ENCODE measurements at regions of chr7 and their contacts with region 1.

Region 1: GRCh38 chr7:142516038-142516501 is 233.2 kb upstream of the PRSS1 start:
- DNase-seq: peak; percentile 53
- H3K4me3 Mint-ChIP-seq: no peak overlapping the region
- H3K27ac Mint-ChIP-seq: peak overlapping the region; percentile 52
- H3K4me1 Mint-ChIP-seq: peaks cover 36% of the 10 kb centered on the region
- H3K27me3 Mint-ChIP-seq: peaks cover 3% of the 10 kb centered on the region

Region 2: GRCh38 chr7:142375666-142376313 is 140.3 kb before region 1 on chr7:
- CTCF ChIA-PET with region 1: no interaction called
- POLR2A ChIA-PET with region 1: no interaction called
- DNase-seq: no peak
- H3K4me3 Mint-ChIP-seq: no peak overlapping the region
- H3K27ac Mint-ChIP-seq: peak overlapping the region; percentile 25
- H3K4me1 Mint-ChIP-seq: no peaks in the 10 kb centered on the region
- H3K27me3 Mint-ChIP-seq: peaks cover 11% of the 10 kb centered on the region

Region 3: GRCh38 chr7:142469696-142470543 is 46.1 kb before region 1 on chr7:
- CTCF ChIA-PET with region 1: no interaction called
- POLR2A ChIA-PET with region 1: no interaction called
- DNase-seq: no peak
- H3K4me3 Mint-ChIP-seq: no peak overlapping the region
- H3K27ac Mint-ChIP-seq: peak overlapping the region; percentile 43
- H3K4me1 Mint-ChIP-seq: peaks cover 23% of the 10 kb centered on the region
- H3K27me3 Mint-ChIP-seq: peaks cover 3% of the 10 kb centered on the region

Region 4: GRCh38 chr7:142488036-142488633 is 27.9 kb before region 1 on chr7:
- CTCF ChIA-PET with region 1: no interaction called
- POLR2A ChIA-PET with region 1: no interaction called
- DNase-seq: no peak
- H3K4me3 Mint-ChIP-seq: no peak overlapping the region
- H3K27ac Mint-ChIP-seq: no peak overlapping the region
- H3K4me1 Mint-ChIP-seq: peaks cover 36% of the 10 kb centered on the region
- H3K27me3 Mint-ChIP-seq: no peaks in the 10 kb centered on the region

Region 5: GRCh38 chr7:142500364-142500763 is 15.7 kb before region 1 on chr7:
- CTCF ChIA-PET with region 1: interaction called, 11 read pairs
- POLR2A ChIA-PET with region 1: no interaction called
- DNase-seq: no peak
- H3K4me3 Mint-ChIP-seq: peak overlapping the region; percentile 53
- H3K27ac Mint-ChIP-seq: peak overlapping the region; percentile 91
- H3K4me1 Mint-ChIP-seq: peaks cover 34% of the 10 kb centered on the region
- H3K27me3 Mint-ChIP-seq: peaks cover 9% of the 10 kb centered on the region

Region 6: DNA sequence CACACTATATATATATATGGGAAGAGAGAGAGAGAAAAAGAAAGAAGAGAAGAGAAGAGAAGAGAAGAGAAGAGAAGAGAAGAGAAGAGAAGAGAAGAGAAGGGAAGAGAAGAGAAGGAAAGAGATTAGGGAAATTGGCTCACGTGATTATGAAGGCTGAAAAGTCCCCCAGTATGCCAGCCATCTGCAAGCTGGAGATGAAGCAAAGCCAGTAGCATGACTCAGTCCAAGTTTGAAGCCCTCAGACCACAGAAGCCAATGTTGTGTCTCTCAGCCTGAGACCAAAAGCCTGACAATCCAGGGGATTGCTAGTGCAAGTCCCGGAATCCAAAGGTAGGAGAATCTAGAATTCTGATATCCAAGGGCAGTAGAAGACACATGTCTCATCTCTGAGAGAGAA is 26.9 kb after region 1 on chr7:
- CTCF ChIA-PET with region 1: no interaction called
- POLR2A ChIA-PET with region 1: no interaction called
- DNase-seq: no peak
- H3K4me3 Mint-ChIP-seq: no peak overlapping the region
- H3K27ac Mint-ChIP-seq: no peak overlapping the region
- H3K4me1 Mint-ChIP-seq: peaks cover 21% of the 10 kb centered on the region
- H3K27me3 Mint-ChIP-seq: no peaks in the 10 kb centered on the region